ENCODE measurements at regions of chr19 and their contacts with region 1.

Region 1: GRCh38 chr19:47243776-47244547 is 12.4 kb upstream of the CCDC9 start:
- DNase-seq: peak; percentile 90
- H3K4me3 ChIP-seq: peak overlapping the region; percentile 12
- H3K27ac ChIP-seq: peak overlapping the region; percentile 29
- H3K4me1 ChIP-seq: peaks cover 5% of the 10 kb centered on the region
- H3K27me3 ChIP-seq: peaks cover 18% of the 10 kb centered on the region
- CTCF ChIP-seq: peak; percentile 96

Region 2: GRCh38 chr19:47145639-47146486 is 98.1 kb before region 1 on chr19:
- intact Hi-C with region 1: loop called (anchors 5 kb)
- DNase-seq: no peak
- H3K4me3 ChIP-seq: no peak overlapping the region
- H3K27ac ChIP-seq: no peak overlapping the region
- H3K4me1 ChIP-seq: no peaks in the 10 kb centered on the region
- H3K27me3 ChIP-seq: no peaks in the 10 kb centered on the region
- CTCF ChIP-seq: no peak

Region 3: DNA sequence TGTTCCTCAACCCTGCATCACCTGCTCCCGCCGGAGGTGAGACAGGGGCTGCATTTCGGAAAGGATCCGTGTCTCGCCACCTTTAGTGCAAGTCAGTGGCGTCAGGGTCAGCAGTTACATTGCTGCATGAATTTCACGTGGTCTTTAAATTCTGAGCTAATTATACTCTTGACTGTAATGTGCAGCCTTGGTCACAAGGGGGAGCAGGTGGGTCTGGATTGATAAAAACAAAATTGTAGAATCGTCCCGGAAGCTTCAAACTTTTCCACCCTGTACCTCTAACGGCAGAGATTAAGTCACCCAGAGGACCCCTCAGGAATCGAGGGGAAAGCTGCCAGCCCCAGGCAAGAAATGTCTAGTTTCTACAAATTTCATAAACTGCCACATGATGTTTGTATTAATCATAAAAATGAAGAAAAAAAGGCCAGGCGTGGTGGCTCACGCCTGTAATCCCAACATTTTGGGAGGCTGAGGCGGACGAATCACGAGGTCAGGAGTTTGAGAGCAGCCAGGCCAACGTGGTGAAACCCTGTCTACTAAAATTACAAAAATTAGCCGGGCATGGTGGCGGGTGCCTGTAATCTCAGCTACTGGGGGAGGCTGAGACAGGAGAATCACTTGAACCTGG is 33.2 kb before region 1 on chr19:
- intact Hi-C with region 1: loop called (anchors 1 kb)
- DNase-seq: peak; percentile 92
- H3K4me3 ChIP-seq: no peak overlapping the region
- H3K27ac ChIP-seq: peak overlapping the region; percentile 40
- H3K4me1 ChIP-seq: no peaks in the 10 kb centered on the region
- H3K27me3 ChIP-seq: no peaks in the 10 kb centered on the region
- CTCF ChIP-seq: peak; percentile 79

Region 4: GRCh38 chr19:47370045-47370611 is 126.2 kb after region 1 on chr19:
- intact Hi-C with region 1: no loop called
- DNase-seq: no peak
- H3K4me3 ChIP-seq: no peak overlapping the region
- H3K27ac ChIP-seq: no peak overlapping the region
- H3K4me1 ChIP-seq: no peaks in the 10 kb centered on the region
- H3K27me3 ChIP-seq: no peaks in the 10 kb centered on the region
- CTCF ChIP-seq: no peak

Measured in colonic mucosa (tissue), 4 donors.